Activated CD4-positive, alpha-beta memory T cell treated with anti-CD3 and anti-CD28 coated beads, Interleukin-2, amount 10 ng/mL, durations not matched to agents 7 days and 5 days (primary cell): ENCODE measurements at regions of chr18 and their contacts with region 1.

Region 1: DNA sequence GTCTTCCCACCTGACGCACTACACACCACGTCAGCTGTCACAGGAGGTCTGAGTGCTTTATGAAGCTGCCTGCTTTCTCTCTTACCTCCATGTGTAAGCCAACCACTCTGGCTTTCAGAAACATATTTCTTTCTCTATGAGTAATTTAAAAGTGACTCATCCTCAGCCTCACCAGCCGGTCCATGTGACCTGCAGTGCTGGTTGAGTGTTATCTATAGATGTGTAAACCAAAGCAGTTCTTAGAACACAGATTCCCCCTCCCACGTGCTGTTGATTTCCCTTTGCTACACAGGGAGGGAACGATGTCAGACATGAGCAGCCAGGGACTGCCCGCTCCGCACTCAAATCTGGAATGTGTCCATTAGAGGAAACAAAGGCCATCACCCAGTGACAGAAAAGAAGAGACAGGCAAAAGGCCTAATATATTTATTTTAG is 157.8 kb downstream of the BCL2 start:
- DNase-seq: peak; percentile 87
- H3K4me3 Mint-ChIP-seq: peak overlapping the region; percentile 76
- H3K27ac Mint-ChIP-seq: peak overlapping the region; percentile 95
- H3K4me1 Mint-ChIP-seq: peaks cover 90% of the 10 kb centered on the region
- H3K27me3 Mint-ChIP-seq: no peaks in the 10 kb centered on the region

Region 2: GRCh38 chr18:63138436-63139340 is 23.1 kb before region 1 on chr18:
- CTCF ChIA-PET with region 1: interaction called, 3 read pairs
- POLR2A ChIA-PET with region 1: interaction called, 50 read pairs
- DNase-seq: no peak
- H3K4me3 Mint-ChIP-seq: peak overlapping the region; percentile 72
- H3K27ac Mint-ChIP-seq: peak overlapping the region; percentile 86
- H3K4me1 Mint-ChIP-seq: peaks cover 68% of the 10 kb centered on the region
- H3K27me3 Mint-ChIP-seq: no peaks in the 10 kb centered on the region

Region 3: GRCh38 chr18:63199743-63200241 is 38.0 kb after region 1 on chr18:
- CTCF ChIA-PET with region 1: interaction called, 8 read pairs
- POLR2A ChIA-PET with region 1: interaction called, 62 read pairs
- DNase-seq: peak; percentile 59
- H3K4me3 Mint-ChIP-seq: no peak overlapping the region
- H3K27ac Mint-ChIP-seq: no peak overlapping the region
- H3K4me1 Mint-ChIP-seq: peaks cover 48% of the 10 kb centered on the region
- H3K27me3 Mint-ChIP-seq: no peaks in the 10 kb centered on the region

Region 4: GRCh38 chr18:63216516-63217311 is 54.9 kb after region 1 on chr18:
- CTCF ChIA-PET with region 1: interaction called, 3 read pairs
- POLR2A ChIA-PET with region 1: interaction called, 27 read pairs
- DNase-seq: peak; percentile 49
- H3K4me3 Mint-ChIP-seq: peak overlapping the region; percentile 64
- H3K27ac Mint-ChIP-seq: peak overlapping the region; percentile 93
- H3K4me1 Mint-ChIP-seq: peaks cover 95% of the 10 kb centered on the region
- H3K27me3 Mint-ChIP-seq: no peaks in the 10 kb centered on the region